AG04449 (cell line): ENCODE measurements at regions of chr1 and their contacts with region 1.

Region 1: GRCh38 chr1:181479137-181479745 is 4.1 kb upstream of the CACNA1E start:
- DNase-seq: peak; percentile 16
- H3K4me3 ChIP-seq: no peak overlapping the region
- CTCF ChIP-seq: peak; percentile 71

Region 2: GRCh38 chr1:181541947-181542346 is 62.7 kb after region 1 on chr1:
- CTCF ChIA-PET with region 1: no interaction called
- POLR2A ChIA-PET with region 1: no interaction called
- DNase-seq: no peak
- H3K4me3 ChIP-seq: no peak overlapping the region
- CTCF ChIP-seq: no peak

Region 3: GRCh38 chr1:182054698-182055326 is 575.6 kb after region 1 on chr1:
- CTCF ChIA-PET with region 1: interaction called, 16 read pairs
- POLR2A ChIA-PET with region 1: no interaction called
- DNase-seq: no peak
- H3K4me3 ChIP-seq: no peak overlapping the region
- CTCF ChIP-seq: peak; percentile 9